ENCODE measurements at regions of chr9 and their contacts with region 1.

Region 1: DNA sequence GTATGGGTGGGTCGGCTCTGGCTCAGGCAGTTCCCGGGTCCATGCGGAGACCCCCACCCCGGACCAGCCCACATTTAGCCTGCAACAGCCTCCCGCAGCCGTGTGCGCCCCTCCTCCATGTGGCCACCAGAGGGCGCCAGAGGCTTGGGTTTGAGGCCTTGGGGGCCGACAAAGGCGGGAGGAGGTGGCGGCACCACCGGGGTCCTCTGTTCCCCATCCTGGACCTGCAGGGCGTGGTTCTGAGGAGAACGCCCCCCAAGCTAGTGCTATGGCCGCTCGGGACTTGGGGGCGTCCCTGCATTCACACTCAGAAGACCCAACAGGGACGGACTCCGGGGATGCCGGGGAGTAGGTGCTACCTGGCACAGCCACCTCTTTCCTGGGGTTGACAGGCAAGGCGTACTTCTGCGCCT is 16.5 kb downstream of the ASS1 start:
- DNase-seq: no peak
- H3K4me3 ChIP-seq: no peak overlapping the region
- H3K27me3 ChIP-seq: no peaks in the 10 kb centered on the region
- CTCF ChIP-seq: peak; percentile 85

Region 2: DNA sequence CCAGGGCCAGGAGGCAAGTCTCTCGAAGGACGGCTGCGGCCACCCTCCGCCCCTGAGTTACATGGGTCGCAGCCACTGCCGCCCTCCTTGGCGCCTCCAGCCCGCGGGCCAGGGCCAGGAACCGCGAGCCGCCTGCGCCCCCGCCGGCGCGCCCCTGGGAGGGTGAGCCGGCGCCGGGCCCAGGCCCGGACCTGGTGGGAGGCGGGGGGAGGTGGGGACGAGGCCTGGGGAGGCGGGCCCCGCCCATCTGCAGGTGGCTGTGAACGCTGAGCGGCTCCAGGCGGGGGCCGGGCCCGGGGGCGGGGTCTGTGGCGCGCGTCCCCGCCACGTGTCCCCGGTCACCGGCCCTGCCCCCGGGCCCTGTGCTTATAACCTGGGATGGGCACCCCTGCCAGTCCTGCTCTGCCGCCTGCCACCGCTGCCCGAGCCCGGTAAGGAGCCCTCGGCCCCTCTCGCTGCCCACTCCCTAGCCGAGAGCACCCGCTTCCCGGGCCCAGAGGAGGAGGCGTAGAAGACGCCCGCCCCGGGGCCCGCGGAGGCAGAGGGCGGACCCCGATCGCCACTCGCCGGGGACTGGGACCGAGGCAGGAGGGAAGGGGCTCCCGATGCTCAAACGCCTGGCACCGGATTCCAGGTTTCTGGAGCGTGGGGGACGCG is 16.5 kb before region 1 on chr9 and contains the start of gene ASS1:
- CTCF ChIA-PET with region 1: no interaction called
- POLR2A ChIA-PET with region 1: no interaction called
- DNase-seq: no peak
- H3K4me3 ChIP-seq: peak within 1 kb of the TSS; percentile 82
- H3K27me3 ChIP-seq: no peaks in the 10 kb centered on the region; the same call in 1 of the 2 replicates
- CTCF ChIP-seq: no peak
- polyA plus RNA-seq, gene ASS1: 1,063 and 1,223 TPM in 2 replicates

Region 3: GRCh38 chr9:130472184-130472705 is 11.0 kb after region 1 on chr9:
- CTCF ChIA-PET with region 1: interaction called, 11 read pairs
- POLR2A ChIA-PET with region 1: no interaction called
- DNase-seq: no peak
- H3K4me3 ChIP-seq: no peak overlapping the region
- H3K27me3 ChIP-seq: no peaks in the 10 kb centered on the region
- CTCF ChIP-seq: no peak

Region 4: GRCh38 chr9:130682490-130683121 is 221.4 kb after region 1 on chr9:
- CTCF ChIA-PET with region 1: interaction called, 184 read pairs
- POLR2A ChIA-PET with region 1: no interaction called
- DNase-seq: no peak
- H3K4me3 ChIP-seq: no peak overlapping the region
- H3K27me3 ChIP-seq: peaks cover 9% of the 10 kb centered on the region
- CTCF ChIP-seq: peak; percentile 86